Psoas muscle (tissue), 8 donors: ENCODE measurements at regions of chr3 and their contacts with region 1.

Region 1: DNA sequence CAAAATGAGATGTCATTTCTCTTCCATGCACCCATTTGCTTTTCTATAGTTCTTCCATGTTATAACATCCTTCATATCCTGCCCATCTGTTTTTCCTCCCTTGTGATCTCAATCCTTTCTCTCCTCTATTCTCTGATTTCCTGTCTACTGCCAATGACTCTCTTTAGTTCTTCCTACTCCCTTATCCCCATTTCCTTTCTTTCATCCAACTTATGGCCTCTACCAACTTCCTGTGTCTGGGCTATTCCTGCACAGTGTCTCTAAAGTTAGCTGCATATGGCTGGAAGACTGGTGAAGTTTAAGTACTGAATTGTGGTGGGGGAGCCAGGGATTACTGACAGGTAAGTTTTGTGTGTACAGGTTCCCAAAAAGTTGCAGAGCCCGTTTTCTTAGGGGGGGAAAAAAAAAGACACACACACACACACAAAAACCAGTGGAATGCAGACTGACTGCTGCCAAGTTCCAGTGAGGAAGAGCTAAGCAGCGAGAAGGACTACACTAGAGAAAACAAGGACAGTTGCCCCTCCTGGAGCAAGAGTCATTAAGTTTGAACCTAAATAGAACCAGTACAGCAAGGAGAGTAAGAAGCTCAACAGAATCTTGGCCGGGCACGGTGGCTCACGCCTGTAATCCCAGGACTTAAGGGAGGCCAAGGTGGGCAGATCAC is 28.8 kb downstream of the XRN1 start:
- DNase-seq: no peak
- ATAC-seq: no peak
- H3K4me3 ChIP-seq: no peak overlapping the region
- H3K27ac ChIP-seq: no peak overlapping the region
- H3K4me1 ChIP-seq: no peaks in the 10 kb centered on the region
- H3K27me3 ChIP-seq: no peaks in the 10 kb centered on the region
- CTCF ChIP-seq: no peak

Region 2: GRCh38 chr3:142363936-142364467 is 55.1 kb before region 1 on chr3:
- intact Hi-C with region 1: loop called in 1 of 2 experiments (anchors 5 kb)
- DNase-seq: no peak
- ATAC-seq: no peak
- H3K4me3 ChIP-seq: no peak overlapping the region
- H3K27ac ChIP-seq: no peak overlapping the region
- H3K4me1 ChIP-seq: no peaks in the 10 kb centered on the region
- H3K27me3 ChIP-seq: no peaks in the 10 kb centered on the region
- CTCF ChIP-seq: no peak

Region 3: DNA sequence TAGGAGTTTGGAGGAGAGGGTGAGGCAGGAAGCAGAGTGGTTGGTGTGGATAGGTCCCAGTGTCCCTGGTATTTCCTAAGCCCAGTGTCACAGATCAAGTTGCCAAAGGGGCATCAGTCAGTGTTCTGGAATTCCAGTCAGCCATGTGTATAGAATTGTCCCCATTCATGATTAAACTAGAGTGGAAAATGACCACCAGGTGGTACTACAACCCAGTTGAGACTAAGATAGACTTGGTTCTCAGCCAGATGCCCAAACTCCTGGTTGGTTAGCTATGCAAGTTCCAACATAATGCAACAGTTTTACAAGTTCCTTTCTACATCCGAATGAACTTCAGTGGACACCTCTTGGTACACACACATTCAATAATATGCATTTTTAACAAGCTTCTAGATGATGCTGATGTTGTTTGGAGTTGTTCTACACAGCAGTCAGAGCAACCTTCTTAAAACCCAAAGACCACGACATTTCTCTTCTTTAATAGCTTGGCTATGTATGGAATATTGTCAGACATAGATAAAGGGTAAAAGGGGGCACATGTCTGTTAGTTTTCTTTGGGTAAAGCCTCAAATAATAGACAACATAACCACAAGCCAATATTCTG is 167.8 kb after region 1 on chr3:
- intact Hi-C with region 1: no loop called
- DNase-seq: no peak
- ATAC-seq: peak; percentile 65 to 92 (median 74)
- H3K4me3 ChIP-seq: no peak overlapping the region
- H3K27ac ChIP-seq: no peak overlapping the region
- H3K4me1 ChIP-seq: no peaks in the 10 kb centered on the region
- H3K27me3 ChIP-seq: no peaks in the 10 kb centered on the region
- CTCF ChIP-seq: peak; percentile 55

Region 4: DNA sequence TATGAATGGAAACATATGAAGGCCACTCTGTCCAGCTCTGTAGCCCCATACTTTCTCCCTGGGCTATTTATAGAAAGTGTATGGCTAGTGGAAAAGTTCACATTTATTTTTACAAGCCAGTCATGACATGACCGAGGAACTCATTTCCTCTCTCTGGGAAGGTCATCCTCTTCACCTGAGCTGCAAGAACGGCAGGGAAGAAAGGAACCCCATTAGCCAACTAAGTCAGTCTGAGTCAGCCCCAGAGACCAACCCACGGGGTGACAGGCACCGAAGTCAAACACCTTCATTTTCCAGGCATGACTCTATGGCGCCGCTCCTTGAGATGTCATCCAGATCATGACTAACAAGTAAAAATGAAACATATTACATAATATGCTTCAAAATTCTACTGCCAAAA is 539.6 kb after region 1 on chr3:
- intact Hi-C with region 1: no loop called
- DNase-seq: peak; percentile 38 to 59
- ATAC-seq: peak; percentile 82 to 90 (median 86)
- H3K4me3 ChIP-seq: peak overlapping the region; percentile 11
- H3K27ac ChIP-seq: peak overlapping the region; percentile 53
- H3K4me1 ChIP-seq: peaks cover 5% of the 10 kb centered on the region
- H3K27me3 ChIP-seq: peaks cover 0 to 12% (median 0%) of the 10 kb centered on the region in 3 donors
- CTCF ChIP-seq: no peak